Panc1 (cell line): ENCODE measurements at regions of chr6 and their contacts with region 1.

Region 1: GRCh38 chr6:129448965-129449364 is 261.0 kb downstream of the ARHGAP18 start:
- DNase-seq: no peak
- ATAC-seq: no peak
- H3K4me3 ChIP-seq: no peak overlapping the region
- H3K27ac ChIP-seq: no peak overlapping the region
- H3K4me1 ChIP-seq: no peaks in the 10 kb centered on the region
- H3K27me3 ChIP-seq: no peaks in the 10 kb centered on the region
- CTCF ChIP-seq: no peak

Region 2: DNA sequence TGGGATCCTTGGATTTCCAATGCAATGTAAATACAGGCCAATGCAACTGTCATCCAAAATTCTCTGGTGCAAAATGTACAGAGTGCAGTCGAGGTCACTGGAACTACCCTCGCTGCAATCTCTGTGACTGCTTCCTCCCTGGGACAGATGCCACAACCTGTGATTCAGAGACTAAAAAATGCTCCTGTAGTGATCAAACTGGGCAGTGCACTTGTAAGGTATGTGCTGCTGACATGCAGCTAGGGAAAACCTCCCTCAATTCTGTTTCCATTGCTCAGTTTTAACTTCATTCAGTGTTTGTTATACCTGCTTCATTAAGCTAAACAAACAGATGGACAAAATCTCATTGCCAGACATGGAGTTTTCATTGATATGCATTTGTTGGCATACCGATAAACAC is 136.1 kb before region 1 on chr6:
- CTCF ChIA-PET with region 1: no interaction called
- POLR2A ChIA-PET with region 1: no interaction called
- in situ Hi-C with region 1: no loop called
- intact Hi-C with region 1: no loop called
- DNase-seq: no peak
- ATAC-seq: peak; percentile 97
- H3K4me3 ChIP-seq: no peak overlapping the region
- H3K27ac ChIP-seq: peak overlapping the region; percentile 91
- H3K4me1 ChIP-seq: peaks cover 12% of the 10 kb centered on the region
- H3K27me3 ChIP-seq: no peaks in the 10 kb centered on the region
- CTCF ChIP-seq: no peak

Region 3: GRCh38 chr6:129331450-129332138 is 117.4 kb before region 1 on chr6:
- CTCF ChIA-PET with region 1: no interaction called
- POLR2A ChIA-PET with region 1: no interaction called
- in situ Hi-C with region 1: no loop called
- intact Hi-C with region 1: no loop called
- DNase-seq: no peak
- ATAC-seq: no peak
- H3K4me3 ChIP-seq: no peak overlapping the region
- H3K27ac ChIP-seq: peak overlapping the region; percentile 70; the same call in 1 of the 2 replicates
- H3K4me1 ChIP-seq: peaks cover 3% of the 10 kb centered on the region; the same call in 1 of the 2 replicates
- H3K27me3 ChIP-seq: no peaks in the 10 kb centered on the region
- CTCF ChIP-seq: no peak

Region 4: GRCh38 chr6:129875610-129876520 is 426.9 kb after region 1 on chr6:
- CTCF ChIA-PET with region 1: interaction called, 13 read pairs
- POLR2A ChIA-PET with region 1: no interaction called
- in situ Hi-C with region 1: no loop called
- intact Hi-C with region 1: no loop called
- DNase-seq: no peak
- ATAC-seq: no peak
- H3K4me3 ChIP-seq: no peak overlapping the region
- H3K27ac ChIP-seq: no peak overlapping the region
- H3K4me1 ChIP-seq: no peaks in the 10 kb centered on the region
- H3K27me3 ChIP-seq: no peaks in the 10 kb centered on the region
- CTCF ChIP-seq: no peak